Activated naive CD4-positive, alpha-beta T cell treated with anti-CD3 and anti-CD28 coated beads, Interleukin-2, amount 10 ng/mL, durations not matched to agents 7 days and 5 days (primary cell): ENCODE measurements at regions of chr11 and their contacts with region 1.

Region 1: GRCh38 chr11:12281571-12282478 is 95.5 kb upstream of the PARVA start:
- DNase-seq: peak; percentile 82
- H3K4me3 Mint-ChIP-seq: no peak overlapping the region
- H3K27ac Mint-ChIP-seq: no peak overlapping the region
- H3K4me1 Mint-ChIP-seq: no peaks in the 10 kb centered on the region
- H3K27me3 Mint-ChIP-seq: peaks cover 10% of the 10 kb centered on the region

Region 2: GRCh38 chr11:11798586-11799438 is 483.0 kb before region 1 on chr11:
- CTCF ChIA-PET with region 1: interaction called, 20 read pairs
- DNase-seq: peak; percentile 85
- H3K4me3 Mint-ChIP-seq: no peak overlapping the region
- H3K27ac Mint-ChIP-seq: no peak overlapping the region
- H3K4me1 Mint-ChIP-seq: no peaks in the 10 kb centered on the region
- H3K27me3 Mint-ChIP-seq: peaks cover 19% of the 10 kb centered on the region

Region 3: GRCh38 chr11:12043959-12044819 is 237.6 kb before region 1 on chr11:
- CTCF ChIA-PET with region 1: interaction called, 532 read pairs
- DNase-seq: peak; percentile 72
- H3K4me3 Mint-ChIP-seq: no peak overlapping the region
- H3K27ac Mint-ChIP-seq: no peak overlapping the region
- H3K4me1 Mint-ChIP-seq: peaks cover 4% of the 10 kb centered on the region
- H3K27me3 Mint-ChIP-seq: peaks cover 48% of the 10 kb centered on the region

Region 4: DNA sequence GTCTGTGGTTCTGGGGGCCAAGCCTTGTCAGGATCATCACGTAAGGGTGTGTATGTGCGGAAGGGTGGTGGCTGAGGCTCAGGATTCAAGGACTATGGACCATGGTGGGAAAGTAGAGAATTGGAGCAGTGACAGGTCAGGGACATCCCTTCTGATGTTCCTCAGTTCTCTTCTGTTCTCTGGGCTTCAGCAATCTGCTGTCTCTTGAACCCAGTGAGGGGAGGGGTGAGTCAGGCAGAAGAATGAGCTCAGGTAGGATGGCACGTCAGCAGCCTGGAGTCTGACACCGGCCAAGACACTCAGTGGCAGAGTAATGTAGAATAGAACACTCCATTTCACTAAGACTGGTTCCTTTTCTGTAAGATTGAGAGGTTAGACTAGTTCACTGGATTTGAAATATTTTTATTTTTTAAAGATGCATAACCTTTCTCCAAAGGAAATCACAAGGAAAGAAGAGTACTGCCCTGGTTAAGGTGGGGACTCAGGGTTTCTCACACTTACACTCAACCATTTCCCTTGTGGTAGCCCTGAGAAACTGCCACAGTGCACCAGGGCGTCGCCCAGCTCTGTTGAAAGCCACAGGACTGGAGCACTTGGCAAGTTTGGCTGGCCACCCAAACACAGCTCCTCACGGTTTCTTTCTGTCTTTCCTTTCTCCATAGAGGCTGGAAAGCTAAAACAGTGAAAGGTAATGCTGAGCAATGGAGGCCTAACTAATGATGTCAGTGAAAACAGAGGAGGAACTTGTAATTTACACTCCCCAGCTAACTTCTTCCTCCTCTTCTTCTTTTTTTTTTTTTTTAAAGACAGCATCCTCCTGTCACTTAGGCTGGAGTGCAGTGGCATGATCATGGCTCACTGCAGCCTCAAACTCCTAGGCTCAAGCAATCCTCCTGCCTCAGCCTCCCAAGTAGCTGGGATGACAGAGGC is 194.5 kb before region 1 on chr11:
- CTCF ChIA-PET with region 1: interaction called, 16 read pairs
- DNase-seq: peak; percentile 75
- H3K4me3 Mint-ChIP-seq: peak overlapping the region; percentile 56
- H3K27ac Mint-ChIP-seq: peak overlapping the region; percentile 87
- H3K4me1 Mint-ChIP-seq: peaks cover 70% of the 10 kb centered on the region
- H3K27me3 Mint-ChIP-seq: no peaks in the 10 kb centered on the region

Region 5: GRCh38 chr11:12137938-12138731 is 143.7 kb before region 1 on chr11:
- CTCF ChIA-PET with region 1: no interaction called
- DNase-seq: no peak
- H3K4me3 Mint-ChIP-seq: no peak overlapping the region
- H3K27ac Mint-ChIP-seq: peak overlapping the region; percentile 26
- H3K4me1 Mint-ChIP-seq: peaks cover 53% of the 10 kb centered on the region
- H3K27me3 Mint-ChIP-seq: no peaks in the 10 kb centered on the region

Region 6: DNA sequence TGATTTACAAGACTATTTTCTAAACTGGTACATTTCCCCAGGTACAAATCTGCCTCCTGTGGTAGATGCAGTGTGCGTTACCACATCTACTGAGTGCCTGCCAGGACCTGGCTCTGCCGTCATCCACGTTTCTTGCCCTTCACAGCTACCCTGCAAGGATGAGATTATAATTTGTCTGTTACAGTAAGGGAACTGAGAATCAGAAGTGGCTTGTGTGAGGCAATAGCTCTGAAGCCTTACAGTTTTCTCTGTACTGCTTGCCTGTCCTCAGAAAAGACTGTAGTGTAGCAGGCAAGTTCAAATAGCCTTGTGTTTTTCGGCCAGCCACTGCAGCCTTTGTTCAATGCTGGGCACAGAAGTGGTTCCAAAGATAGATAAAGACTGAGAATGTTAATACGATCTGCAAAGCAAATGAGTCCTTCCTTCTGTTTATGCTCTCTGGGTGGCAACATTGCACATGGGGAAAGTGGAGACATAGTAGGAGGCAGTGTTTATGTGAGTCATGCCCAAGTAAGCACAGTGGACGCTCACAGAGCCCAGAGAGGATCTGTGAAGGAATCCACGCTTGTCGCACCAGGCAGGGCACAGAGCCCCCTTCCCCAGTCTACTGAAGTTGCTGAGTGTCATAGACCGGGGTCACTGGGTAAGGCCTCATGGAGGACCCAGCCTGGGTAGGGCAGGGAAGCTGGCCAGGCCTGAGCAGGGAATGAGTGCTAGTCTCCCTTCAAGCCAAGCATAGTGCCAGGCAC is 122.3 kb before region 1 on chr11:
- CTCF ChIA-PET with region 1: interaction called, 13 read pairs
- DNase-seq: no peak
- H3K4me3 Mint-ChIP-seq: no peak overlapping the region
- H3K27ac Mint-ChIP-seq: no peak overlapping the region
- H3K4me1 Mint-ChIP-seq: peaks cover 52% of the 10 kb centered on the region
- H3K27me3 Mint-ChIP-seq: no peaks in the 10 kb centered on the region

Region 7: GRCh38 chr11:12243486-12243885 is 38.3 kb before region 1 on chr11:
- CTCF ChIA-PET with region 1: interaction called, 10 read pairs
- DNase-seq: no peak
- H3K4me3 Mint-ChIP-seq: no peak overlapping the region
- H3K27ac Mint-ChIP-seq: no peak overlapping the region
- H3K4me1 Mint-ChIP-seq: peaks cover 30% of the 10 kb centered on the region
- H3K27me3 Mint-ChIP-seq: no peaks in the 10 kb centered on the region

Region 8: GRCh38 chr11:12260731-12261521 is 20.9 kb before region 1 on chr11:
- CTCF ChIA-PET with region 1: interaction called, 21 read pairs
- DNase-seq: no peak
- H3K4me3 Mint-ChIP-seq: no peak overlapping the region
- H3K27ac Mint-ChIP-seq: no peak overlapping the region
- H3K4me1 Mint-ChIP-seq: no peaks in the 10 kb centered on the region
- H3K27me3 Mint-ChIP-seq: no peaks in the 10 kb centered on the region

Region 9: DNA sequence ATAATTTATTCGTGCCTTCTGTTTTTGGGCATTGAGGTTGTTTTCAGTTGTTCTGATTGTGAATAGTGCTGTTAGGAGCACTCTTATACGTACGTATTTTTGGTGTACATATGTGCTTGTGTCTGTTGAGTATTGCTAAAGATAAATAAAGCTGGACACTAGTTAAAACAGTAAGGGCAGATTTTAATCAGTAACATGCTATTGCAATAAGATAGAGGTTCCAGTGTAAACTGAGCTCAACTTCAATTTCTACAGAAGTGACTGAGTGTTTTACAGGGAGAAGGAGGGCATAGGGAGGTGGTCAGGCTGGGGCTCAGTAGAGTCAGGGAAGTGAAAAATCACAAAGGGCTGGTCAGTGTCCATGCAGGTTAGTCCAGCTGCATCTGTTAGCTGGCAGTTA is 19.6 kb after region 1 on chr11:
- CTCF ChIA-PET with region 1: no interaction called
- DNase-seq: no peak
- H3K4me3 Mint-ChIP-seq: no peak overlapping the region
- H3K27ac Mint-ChIP-seq: no peak overlapping the region
- H3K4me1 Mint-ChIP-seq: no peaks in the 10 kb centered on the region
- H3K27me3 Mint-ChIP-seq: no peaks in the 10 kb centered on the region

Region 10: GRCh38 chr11:12353534-12353933 is 71.7 kb after region 1 on chr11:
- CTCF ChIA-PET with region 1: no interaction called
- DNase-seq: no peak
- H3K4me3 Mint-ChIP-seq: no peak overlapping the region
- H3K27ac Mint-ChIP-seq: no peak overlapping the region
- H3K4me1 Mint-ChIP-seq: peaks cover 44% of the 10 kb centered on the region
- H3K27me3 Mint-ChIP-seq: peaks cover 10% of the 10 kb centered on the region

Region 11: GRCh38 chr11:12841946-12842630 is 560.3 kb after region 1 on chr11:
- CTCF ChIA-PET with region 1: no interaction called
- DNase-seq: no peak
- H3K4me3 Mint-ChIP-seq: no peak overlapping the region
- H3K27ac Mint-ChIP-seq: no peak overlapping the region
- H3K4me1 Mint-ChIP-seq: peaks cover 10% of the 10 kb centered on the region
- H3K27me3 Mint-ChIP-seq: peaks cover 21% of the 10 kb centered on the region